CD4-positive, alpha-beta memory T cell (primary cell): ENCODE measurements at regions of chr12 and their contacts with region 1.

Region 1: DNA sequence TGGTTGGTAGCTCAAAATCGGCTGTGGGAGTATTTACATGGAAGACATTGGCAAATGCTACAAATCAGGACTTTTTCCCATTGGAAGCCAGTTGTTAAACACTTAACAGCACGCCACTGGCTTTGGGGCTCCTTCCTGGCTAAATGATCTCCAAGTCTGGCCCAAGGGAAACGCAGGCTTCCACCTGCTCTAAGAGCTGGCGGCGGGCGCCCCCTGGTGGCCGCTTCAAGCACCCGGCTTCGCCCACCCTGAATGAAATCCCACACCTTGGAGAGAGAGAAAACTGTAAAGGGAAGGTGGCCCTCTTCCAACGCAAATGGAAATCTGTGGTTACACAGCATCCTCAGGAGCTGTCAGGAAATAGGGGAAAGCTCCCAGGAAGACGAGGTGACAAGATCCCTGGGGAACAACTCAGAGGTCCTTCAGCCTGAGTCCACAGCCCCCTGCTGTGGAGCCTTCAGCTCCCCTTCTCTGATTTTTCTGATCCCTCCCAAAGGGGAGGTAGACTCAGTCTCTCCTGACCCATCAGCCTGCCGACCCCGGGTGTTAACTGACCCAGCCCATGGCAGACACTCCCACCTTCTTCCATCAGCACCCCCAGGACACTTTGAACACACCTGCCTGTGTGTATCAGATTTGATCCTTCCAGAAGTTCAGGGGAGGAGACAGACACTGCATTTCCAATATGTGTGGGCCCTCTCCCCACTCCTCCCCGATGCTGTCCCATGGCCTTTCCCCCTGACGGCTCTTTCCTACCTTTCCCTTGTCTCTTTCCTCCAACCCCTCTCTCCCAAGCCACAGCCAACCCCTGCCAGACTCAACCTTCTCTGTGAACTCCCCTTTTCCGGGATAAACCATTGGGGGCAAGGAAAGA is 15.4 kb downstream of the SELPLG start:
- DNase-seq: peak; percentile 73 to 78 (median 76)
- H3K4me3 ChIP-seq: no peak overlapping the region
- H3K4me3 Mint-ChIP-seq: peak overlapping the region in 6 of 8 donors; percentile 19 to 59 (median 48)
- H3K27ac ChIP-seq: peak overlapping the region; percentile 78
- H3K27ac Mint-ChIP-seq: peak overlapping the region; percentile 87 to 99 (median 95)
- H3K4me1 ChIP-seq: peaks cover 64% of the 10 kb centered on the region
- H3K4me1 Mint-ChIP-seq: peaks cover 47 to 78% (median 62%) of the 10 kb centered on the region in 4 donors
- H3K27me3 ChIP-seq: no peaks in the 10 kb centered on the region
- H3K27me3 Mint-ChIP-seq: no peaks in the 10 kb centered on the region

Region 2: DNA sequence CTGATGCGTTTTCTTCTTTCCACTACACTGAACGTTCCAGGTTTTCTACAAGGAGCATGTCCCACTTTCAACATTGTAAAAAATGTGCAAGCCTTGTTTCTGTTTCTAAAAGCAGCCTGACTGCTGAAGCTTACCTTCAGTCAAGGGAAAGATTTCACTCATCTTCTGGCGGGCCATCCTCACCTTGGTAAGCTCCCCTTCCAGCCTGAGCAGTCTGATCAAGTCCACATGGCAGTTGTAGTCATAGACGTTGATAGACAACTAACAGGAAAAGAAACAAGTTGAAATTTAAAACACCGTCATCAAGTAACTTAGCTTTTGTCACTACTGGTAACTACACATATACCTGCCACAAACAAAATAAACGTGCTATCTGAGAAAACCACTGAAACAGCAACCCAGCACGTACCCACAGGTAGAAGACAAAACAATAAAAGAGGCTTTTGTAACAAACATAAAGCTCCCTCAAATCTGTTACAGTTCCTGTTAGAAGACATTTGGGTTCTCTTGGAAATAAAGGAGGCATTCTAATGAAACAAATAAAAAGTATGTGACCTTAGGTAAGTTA is 69.3 kb before region 1 on chr12:
- CTCF ChIA-PET with region 1: interaction called, 10 read pairs
- POLR2A ChIA-PET with region 1: no interaction called
- intact Hi-C with region 1: no loop called
- DNase-seq: no peak
- H3K4me3 ChIP-seq: no peak overlapping the region
- H3K4me3 Mint-ChIP-seq: no peak overlapping the region
- H3K27ac ChIP-seq: no peak overlapping the region
- H3K27ac Mint-ChIP-seq: peak overlapping the region in 3 of 7 donors; percentile 22 to 59 (median 46)
- H3K4me1 ChIP-seq: peaks cover 33% of the 10 kb centered on the region
- H3K4me1 Mint-ChIP-seq: peaks cover 42 to 58% (median 46%) of the 10 kb centered on the region in 4 donors
- H3K27me3 ChIP-seq: no peaks in the 10 kb centered on the region
- H3K27me3 Mint-ChIP-seq: no peaks in the 10 kb centered on the region

Region 3: GRCh38 chr12:108576660-108577234 is 41.6 kb before region 1 on chr12:
- CTCF ChIA-PET with region 1: interaction called, 339 read pairs
- POLR2A ChIA-PET with region 1: interaction called, 6 read pairs
- intact Hi-C with region 1: no loop called
- DNase-seq: no peak
- H3K4me3 ChIP-seq: no peak overlapping the region
- H3K4me3 Mint-ChIP-seq: no peak overlapping the region
- H3K27ac ChIP-seq: no peak overlapping the region
- H3K27ac Mint-ChIP-seq: no peak overlapping the region
- H3K4me1 ChIP-seq: peaks cover 40% of the 10 kb centered on the region
- H3K4me1 Mint-ChIP-seq: peaks cover 27 to 41% (median 32%) of the 10 kb centered on the region in 4 donors
- H3K27me3 ChIP-seq: no peaks in the 10 kb centered on the region
- H3K27me3 Mint-ChIP-seq: no peaks in the 10 kb centered on the region

Region 4: GRCh38 chr12:108633534-108634248 is 15.4 kb after region 1 on chr12 and contains the start of gene SELPLG:
- CTCF ChIA-PET with region 1: interaction called, 463 read pairs
- POLR2A ChIA-PET with region 1: interaction called, 310 read pairs
- intact Hi-C with region 1: loop called (anchors 1 kb)
- DNase-seq: peak; percentile 91 to 97 (median 94)
- H3K4me3 ChIP-seq: peak within 1 kb of the TSS; percentile 92 to 95
- H3K4me3 Mint-ChIP-seq: peak within 1 kb of the TSS; percentile 94 to 100 (median 99)
- H3K27ac ChIP-seq: peak within 1 kb of the TSS; percentile 92
- H3K27ac Mint-ChIP-seq: peak within 1 kb of the TSS; percentile 99 to 100 (median 100)
- H3K4me1 ChIP-seq: peaks cover 65% of the 10 kb centered on the region
- H3K4me1 Mint-ChIP-seq: peaks cover 40 to 84% (median 54%) of the 10 kb centered on the region in 4 donors
- H3K27me3 ChIP-seq: no peaks in the 10 kb centered on the region
- H3K27me3 Mint-ChIP-seq: no peaks in the 10 kb centered on the region
- total RNA-seq, gene SELPLG: 175 to 176 TPM

Region 5: GRCh38 chr12:108649669-108650068 is 31.4 kb after region 1 on chr12:
- CTCF ChIA-PET with region 1: interaction called, 67 read pairs
- POLR2A ChIA-PET with region 1: interaction called, 22 read pairs
- intact Hi-C with region 1: loop called (anchors 5 kb)
- DNase-seq: no peak
- H3K4me3 ChIP-seq: no peak overlapping the region
- H3K4me3 Mint-ChIP-seq: no peak overlapping the region
- H3K27ac ChIP-seq: no peak overlapping the region
- H3K27ac Mint-ChIP-seq: peak overlapping the region in 3 of 7 donors; percentile 0 to 48 (median 3)
- H3K4me1 ChIP-seq: peaks cover 13% of the 10 kb centered on the region
- H3K4me1 Mint-ChIP-seq: peaks cover 17 to 26% (median 21%) of the 10 kb centered on the region in 4 donors
- H3K27me3 ChIP-seq: no peaks in the 10 kb centered on the region
- H3K27me3 Mint-ChIP-seq: no peaks in the 10 kb centered on the region

Region 6: GRCh38 chr12:108731105-108731865 is 113.0 kb after region 1 on chr12 and contains the start of gene CORO1C:
- CTCF ChIA-PET with region 1: interaction called, 4 read pairs
- POLR2A ChIA-PET with region 1: interaction called, 8 read pairs
- intact Hi-C with region 1: loop called (anchors 5 kb)
- DNase-seq: peak; percentile 94 to 97 (median 95)
- H3K4me3 ChIP-seq: peak within 1 kb of the TSS; percentile 88 to 91
- H3K4me3 Mint-ChIP-seq: peak within 1 kb of the TSS; percentile 89 to 97 (median 95)
- H3K27ac ChIP-seq: peak within 1 kb of the TSS; percentile 69
- H3K27ac Mint-ChIP-seq: peak within 1 kb of the TSS; percentile 92 to 99 (median 98)
- H3K4me1 ChIP-seq: peaks cover 5% of the 10 kb centered on the region
- H3K4me1 Mint-ChIP-seq: peaks cover 11 to 28% (median 26%) of the 10 kb centered on the region in 4 donors
- H3K27me3 ChIP-seq: no peaks in the 10 kb centered on the region
- H3K27me3 Mint-ChIP-seq: no peaks in the 10 kb centered on the region
- total RNA-seq, gene CORO1C: 10.3 to 11.9 TPM

Region 7: GRCh38 chr12:108907476-108908351 is 289.4 kb after region 1 on chr12:
- CTCF ChIA-PET with region 1: no interaction called
- POLR2A ChIA-PET with region 1: no interaction called
- intact Hi-C with region 1: no loop called
- DNase-seq: no peak
- H3K4me3 ChIP-seq: no peak overlapping the region
- H3K4me3 Mint-ChIP-seq: no peak overlapping the region
- H3K27ac ChIP-seq: no peak overlapping the region
- H3K27ac Mint-ChIP-seq: no peak overlapping the region
- H3K4me1 ChIP-seq: no peaks in the 10 kb centered on the region
- H3K4me1 Mint-ChIP-seq: no peaks in the 10 kb centered on the region
- H3K27me3 ChIP-seq: no peaks in the 10 kb centered on the region
- H3K27me3 Mint-ChIP-seq: peaks cover 6% of the 10 kb centered on the region in 2 donors

Region 8: DNA sequence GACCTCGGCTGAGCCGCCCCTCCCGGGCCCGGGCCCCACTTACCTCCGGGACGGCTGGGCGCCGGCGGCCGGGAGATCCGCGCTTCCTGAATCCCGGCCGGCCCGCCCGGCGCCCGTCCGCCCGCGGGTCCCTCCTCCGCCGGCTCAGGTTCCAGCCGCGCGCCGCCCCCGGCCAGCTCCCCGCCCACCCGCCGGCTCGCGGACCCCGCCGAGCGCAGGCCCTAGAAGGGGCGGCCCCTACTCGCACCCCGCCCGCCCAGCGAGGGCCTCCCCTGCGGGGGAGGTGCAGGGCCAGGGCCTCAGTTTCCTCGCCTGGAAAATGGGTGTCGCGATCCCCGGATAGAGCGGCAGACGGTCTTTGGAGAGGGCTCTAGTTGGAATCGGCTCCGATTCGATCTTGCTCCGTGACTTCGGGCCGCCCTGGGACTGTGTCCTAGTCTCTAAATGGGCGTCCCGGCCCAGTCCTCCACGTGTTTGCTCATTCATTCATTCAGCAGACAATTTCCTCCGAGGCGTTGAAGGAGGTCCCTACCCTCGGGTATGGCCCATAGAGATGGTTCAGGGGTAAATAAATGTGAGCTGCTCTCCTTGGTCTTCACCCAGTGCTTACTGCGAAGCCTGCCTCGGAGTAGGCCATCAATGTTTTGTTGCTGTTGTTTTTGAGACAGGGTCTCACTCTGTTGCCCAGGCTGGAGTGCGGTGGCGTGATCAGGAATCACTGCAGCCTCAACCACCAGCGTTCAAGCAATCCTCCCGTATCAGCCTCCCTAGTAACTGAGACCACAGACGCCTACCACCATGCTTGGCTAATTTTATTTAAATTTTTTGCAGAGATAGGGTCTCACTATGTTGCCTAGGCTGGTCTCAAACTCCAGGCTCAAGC is 1215.2 kb after region 1 on chr12 and contains the start of gene TRPV4:
- CTCF ChIA-PET with region 1: no interaction called
- POLR2A ChIA-PET with region 1: no interaction called
- intact Hi-C with region 1: no loop called
- DNase-seq: no peak
- H3K4me3 ChIP-seq: no peak within 1 kb of the TSS
- H3K4me3 Mint-ChIP-seq: peak within 1 kb of the TSS in 6 of 8 donors; percentile 39 to 63 (median 53)
- H3K27ac ChIP-seq: no peak within 1 kb of the TSS
- H3K27ac Mint-ChIP-seq: no peak within 1 kb of the TSS
- H3K4me1 ChIP-seq: no peaks in the 10 kb centered on the region
- H3K4me1 Mint-ChIP-seq: peaks cover 2 to 5% (median 4%) of the 10 kb centered on the region in 4 donors
- H3K27me3 ChIP-seq: no peaks in the 10 kb centered on the region
- H3K27me3 Mint-ChIP-seq: peaks cover 4 to 20% of the 10 kb centered on the region in 2 donors
- total RNA-seq, gene TRPV4: 0.17 TPM in 1 of 2 experiments, not detected in the other

Region 9: GRCh38 chr12:110102255-110102654 is 1483.9 kb after region 1 on chr12:
- CTCF ChIA-PET with region 1: no interaction called
- POLR2A ChIA-PET with region 1: no interaction called
- intact Hi-C with region 1: no loop called
- DNase-seq: peak in 3 of 5 donors; percentile 13 to 31 (median 18)
- H3K4me3 ChIP-seq: no peak overlapping the region
- H3K4me3 Mint-ChIP-seq: no peak overlapping the region
- H3K27ac ChIP-seq: no peak overlapping the region
- H3K27ac Mint-ChIP-seq: peak overlapping the region in 2 of 7 donors; percentile 53 to 62
- H3K4me1 ChIP-seq: peaks cover 6% of the 10 kb centered on the region
- H3K4me1 Mint-ChIP-seq: peaks cover 5 to 8% (median 6%) of the 10 kb centered on the region in 4 donors
- H3K27me3 ChIP-seq: no peaks in the 10 kb centered on the region
- H3K27me3 Mint-ChIP-seq: peaks cover 0 to 4% of the 10 kb centered on the region in 2 donors